Right lobe of liver (tissue), 6 donors: ENCODE measurements at regions of chr21 and their contacts with region 1.

Region 1: DNA sequence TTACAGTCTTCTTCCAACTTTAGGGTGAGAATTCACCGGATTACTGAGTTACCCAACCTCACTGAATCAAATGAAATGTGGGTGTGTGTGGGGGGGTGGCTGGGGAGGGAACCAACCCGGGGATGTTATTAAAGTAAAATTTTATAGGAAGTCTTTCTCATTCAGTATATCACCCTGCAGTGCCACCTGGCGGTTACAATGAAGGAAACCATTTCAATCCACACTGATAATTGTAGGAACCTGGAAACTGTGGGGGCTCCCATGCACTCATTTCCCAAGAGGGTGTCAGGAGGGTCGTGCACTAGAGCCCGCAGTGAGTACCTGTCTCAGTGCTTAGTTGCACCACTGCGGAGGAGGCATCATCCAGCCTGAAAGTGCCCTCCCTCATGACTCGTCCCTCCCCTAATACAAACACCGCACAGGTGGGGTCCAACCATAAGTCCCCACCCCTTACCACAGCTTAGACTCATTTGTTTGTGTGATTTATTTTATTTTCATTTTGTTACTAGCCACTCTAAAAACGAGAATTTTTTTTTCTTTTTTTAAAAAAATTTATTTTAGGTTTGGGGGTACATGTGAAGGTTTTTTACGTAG is 29.1 kb upstream of the IGSF5 start:
- DNase-seq: peak in 2 of 3 donors; percentile 45 to 52
- ATAC-seq: peak; percentile 50 to 63 (median 61)
- H3K4me3 ChIP-seq: no peak overlapping the region
- H3K27ac ChIP-seq: no peak overlapping the region
- H3K4me1 ChIP-seq: no peaks in the 10 kb centered on the region
- H3K27me3 ChIP-seq: no peaks in the 10 kb centered on the region
- CTCF ChIP-seq: peak; percentile 42 to 76 (median 66)
- POLR2A ChIP-seq: no peak

Region 2: GRCh38 chr21:39518138-39518846 is 197.6 kb before region 1 on chr21:
- intact Hi-C with region 1: loop called (anchors 5 kb)
- DNase-seq: peak in 1 of 3 donors; percentile 58
- ATAC-seq: peak; percentile 80 to 94 (median 92)
- H3K4me3 ChIP-seq: no peak overlapping the region
- H3K27ac ChIP-seq: no peak overlapping the region
- H3K4me1 ChIP-seq: peaks cover 0 to 3% (median 0%) of the 10 kb centered on the region in 4 donors
- H3K27me3 ChIP-seq: no peaks in the 10 kb centered on the region
- CTCF ChIP-seq: peak; percentile 78 to 90 (median 89)
- POLR2A ChIP-seq: no peak

Region 3: GRCh38 chr21:39825238-39825637 is 109.3 kb after region 1 on chr21:
- intact Hi-C with region 1: no loop called
- DNase-seq: no peak
- ATAC-seq: no peak
- H3K4me3 ChIP-seq: no peak overlapping the region
- H3K27ac ChIP-seq: no peak overlapping the region
- H3K4me1 ChIP-seq: no peaks in the 10 kb centered on the region
- H3K27me3 ChIP-seq: no peaks in the 10 kb centered on the region
- CTCF ChIP-seq: no peak
- POLR2A ChIP-seq: no peak

Region 4: GRCh38 chr21:39911286-39912199 is 195.6 kb after region 1 on chr21:
- intact Hi-C with region 1: no loop called
- DNase-seq: no peak
- ATAC-seq: no peak
- H3K4me3 ChIP-seq: no peak overlapping the region
- H3K27ac ChIP-seq: no peak overlapping the region
- H3K4me1 ChIP-seq: no peaks in the 10 kb centered on the region
- H3K27me3 ChIP-seq: no peaks in the 10 kb centered on the region
- CTCF ChIP-seq: no peak
- POLR2A ChIP-seq: no peak